ENCODE measurements at regions of chr1 and their contacts with region 1.

Region 1: GRCh38 chr1:205321164-205321958 is at the start of gene NUAK2:
- DNase-seq: peak; percentile 90
- H3K4me3 Mint-ChIP-seq: peak within 1 kb of the TSS; percentile 98
- H3K27ac Mint-ChIP-seq: peak within 1 kb of the TSS; percentile 93
- H3K4me1 Mint-ChIP-seq: peaks cover 50% of the 10 kb centered on the region
- H3K27me3 Mint-ChIP-seq: no peaks in the 10 kb centered on the region
- total RNA-seq, gene NUAK2: 11.2 to 12.2 TPM

Region 2: DNA sequence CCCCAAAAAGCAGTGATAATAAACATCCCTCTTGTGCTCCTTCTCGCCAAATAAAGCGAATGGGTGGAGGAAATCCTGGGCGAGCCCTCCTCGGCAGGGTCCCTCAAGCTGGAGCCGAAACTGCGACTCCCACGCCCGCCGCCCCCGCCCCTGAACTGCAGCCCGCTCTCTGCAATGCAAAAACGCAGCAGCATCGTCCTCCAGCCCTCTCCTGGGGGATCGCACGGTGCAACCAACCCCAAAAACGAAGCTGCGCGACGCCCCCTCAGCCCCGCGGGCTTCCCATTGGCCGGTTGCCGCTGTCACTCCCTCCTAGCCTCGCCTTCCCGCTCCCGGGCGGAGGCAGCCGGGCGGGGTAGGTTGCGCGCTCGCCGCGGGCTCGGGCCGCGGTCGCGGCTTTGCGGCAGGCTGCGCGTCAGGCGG is 93.8 kb before region 1 on chr1 and contains the start of gene TMCC2:
- CTCF ChIA-PET with region 1: interaction called, 48 read pairs
- intact Hi-C with region 1: loop called (anchors 1 kb)
- DNase-seq: peak; percentile 89
- H3K4me3 Mint-ChIP-seq: peak within 1 kb of the TSS; percentile 96
- H3K27ac Mint-ChIP-seq: peak within 1 kb of the TSS; percentile 93
- H3K4me1 Mint-ChIP-seq: peaks cover 25% of the 10 kb centered on the region
- H3K27me3 Mint-ChIP-seq: peaks cover 16% of the 10 kb centered on the region
- total RNA-seq, gene TMCC2: 42.5 to 44.8 TPM

Region 3: GRCh38 chr1:205255941-205256780 is 65.2 kb before region 1 on chr1:
- CTCF ChIA-PET with region 1: interaction called, 28 read pairs
- intact Hi-C with region 1: no loop called
- DNase-seq: peak; percentile 93
- H3K4me3 Mint-ChIP-seq: no peak overlapping the region
- H3K27ac Mint-ChIP-seq: peak overlapping the region; percentile 42
- H3K4me1 Mint-ChIP-seq: peaks cover 25% of the 10 kb centered on the region
- H3K27me3 Mint-ChIP-seq: no peaks in the 10 kb centered on the region

Region 4: DNA sequence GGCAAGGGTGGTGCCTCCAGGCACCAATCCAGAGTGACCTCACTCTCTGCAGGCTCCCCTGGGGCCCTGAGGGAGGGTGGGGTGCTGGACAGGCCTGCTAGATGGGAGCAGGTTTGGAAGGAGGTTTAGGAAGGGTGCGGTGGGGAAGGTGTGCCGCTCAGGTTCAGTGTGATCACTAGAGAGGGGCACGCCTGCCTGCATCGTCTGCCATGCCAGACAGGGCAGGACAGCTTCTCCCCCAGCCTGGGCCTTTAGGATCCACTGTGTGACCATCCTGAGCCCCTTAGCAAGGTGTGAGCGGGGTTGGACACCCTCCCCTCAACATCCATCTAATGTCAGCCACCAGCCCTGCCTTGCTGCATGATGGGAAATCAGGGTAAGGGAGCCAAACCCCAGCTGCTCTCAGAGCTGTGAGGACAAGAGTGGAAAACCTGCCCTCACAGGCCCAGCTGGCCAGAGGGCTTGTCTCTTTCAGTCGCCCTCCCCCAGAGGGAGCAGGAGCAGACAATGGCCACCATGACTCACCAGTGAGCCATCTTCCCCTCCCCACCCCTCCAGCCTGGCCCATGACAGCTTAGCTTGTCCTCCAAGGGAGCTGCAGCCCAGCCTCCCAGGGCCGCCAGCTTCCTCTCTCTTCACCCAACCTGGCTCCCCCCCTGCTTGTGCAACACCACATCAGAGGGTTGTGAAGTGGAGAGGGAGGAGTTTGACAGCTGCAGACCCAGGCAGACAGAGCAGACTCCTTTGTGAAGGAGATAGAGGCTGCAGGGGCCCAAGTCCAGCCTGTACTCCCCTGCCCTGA is 36.8 kb before region 1 on chr1:
- CTCF ChIA-PET with region 1: interaction called, 948 read pairs
- intact Hi-C with region 1: loop called (anchors 1 kb)
- DNase-seq: peak; percentile 97
- H3K4me3 Mint-ChIP-seq: peak overlapping the region; percentile 29
- H3K27ac Mint-ChIP-seq: peak overlapping the region; percentile 87
- H3K4me1 Mint-ChIP-seq: peaks cover 77% of the 10 kb centered on the region
- H3K27me3 Mint-ChIP-seq: no peaks in the 10 kb centered on the region

Region 5: DNA sequence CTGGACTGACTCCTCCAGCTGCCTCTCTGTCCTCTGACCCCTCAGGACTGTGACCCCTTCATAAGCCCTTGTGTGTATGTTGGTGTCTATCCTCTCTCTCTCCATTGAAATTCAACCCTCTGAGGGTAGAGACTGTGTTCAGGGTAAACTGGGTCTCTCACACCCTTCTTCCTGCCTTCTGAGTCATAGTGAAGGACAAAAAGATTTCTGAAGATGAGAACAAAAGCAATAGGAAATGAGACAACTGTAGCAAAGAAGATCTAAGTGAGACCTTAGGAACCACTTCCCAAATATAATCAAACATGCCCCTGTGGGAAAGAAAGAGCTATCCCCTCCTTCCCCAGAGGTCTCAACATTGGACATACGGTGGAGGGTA is 16.7 kb before region 1 on chr1:
- CTCF ChIA-PET with region 1: interaction called, 11 read pairs
- intact Hi-C with region 1: no loop called
- DNase-seq: no peak
- H3K4me3 Mint-ChIP-seq: no peak overlapping the region
- H3K27ac Mint-ChIP-seq: peak overlapping the region; percentile 75
- H3K4me1 Mint-ChIP-seq: peaks cover 34% of the 10 kb centered on the region
- H3K27me3 Mint-ChIP-seq: no peaks in the 10 kb centered on the region

Region 6: DNA sequence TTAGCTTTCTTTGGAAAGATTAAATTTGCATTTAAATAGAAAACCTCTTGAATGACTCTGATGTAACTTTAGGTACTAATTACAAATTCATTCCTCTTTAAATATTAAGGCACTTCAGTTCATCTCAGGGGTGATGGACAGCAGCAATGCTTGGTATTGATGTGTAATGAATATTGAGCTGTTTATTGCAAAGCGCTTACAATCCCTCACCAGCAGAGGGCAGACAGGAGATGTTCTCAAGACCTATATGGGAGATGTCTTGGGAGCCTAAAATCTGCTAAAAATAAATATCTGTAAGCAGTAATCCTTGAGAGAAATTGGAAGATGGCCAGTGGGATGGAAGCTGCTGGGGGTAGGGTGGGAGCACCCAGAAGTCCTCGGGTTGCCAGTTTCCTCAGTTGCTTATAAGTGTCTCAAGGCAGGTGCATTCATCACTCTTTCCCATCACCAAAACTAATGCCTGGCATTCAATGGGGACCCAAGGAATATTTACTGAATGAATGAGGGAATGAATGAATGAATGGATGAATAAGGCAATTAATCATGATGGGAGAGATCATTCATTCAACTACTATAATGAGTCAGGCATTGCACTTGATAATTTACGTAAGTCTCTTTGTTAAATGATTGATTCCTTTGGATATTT is 33.0 kb after region 1 on chr1:
- CTCF ChIA-PET with region 1: interaction called, 10 read pairs
- intact Hi-C with region 1: no loop called
- DNase-seq: peak; percentile 82
- H3K4me3 Mint-ChIP-seq: no peak overlapping the region
- H3K27ac Mint-ChIP-seq: no peak overlapping the region
- H3K4me1 Mint-ChIP-seq: no peaks in the 10 kb centered on the region
- H3K27me3 Mint-ChIP-seq: no peaks in the 10 kb centered on the region

Measured in activated naive CD4-positive, alpha-beta T cell treated with anti-CD3 and anti-CD28 coated beads for 36 hours (primary cell).